MCF 10A (cell line): ENCODE measurements at regions of chr1 and their contacts with region 1.

Region 1: DNA sequence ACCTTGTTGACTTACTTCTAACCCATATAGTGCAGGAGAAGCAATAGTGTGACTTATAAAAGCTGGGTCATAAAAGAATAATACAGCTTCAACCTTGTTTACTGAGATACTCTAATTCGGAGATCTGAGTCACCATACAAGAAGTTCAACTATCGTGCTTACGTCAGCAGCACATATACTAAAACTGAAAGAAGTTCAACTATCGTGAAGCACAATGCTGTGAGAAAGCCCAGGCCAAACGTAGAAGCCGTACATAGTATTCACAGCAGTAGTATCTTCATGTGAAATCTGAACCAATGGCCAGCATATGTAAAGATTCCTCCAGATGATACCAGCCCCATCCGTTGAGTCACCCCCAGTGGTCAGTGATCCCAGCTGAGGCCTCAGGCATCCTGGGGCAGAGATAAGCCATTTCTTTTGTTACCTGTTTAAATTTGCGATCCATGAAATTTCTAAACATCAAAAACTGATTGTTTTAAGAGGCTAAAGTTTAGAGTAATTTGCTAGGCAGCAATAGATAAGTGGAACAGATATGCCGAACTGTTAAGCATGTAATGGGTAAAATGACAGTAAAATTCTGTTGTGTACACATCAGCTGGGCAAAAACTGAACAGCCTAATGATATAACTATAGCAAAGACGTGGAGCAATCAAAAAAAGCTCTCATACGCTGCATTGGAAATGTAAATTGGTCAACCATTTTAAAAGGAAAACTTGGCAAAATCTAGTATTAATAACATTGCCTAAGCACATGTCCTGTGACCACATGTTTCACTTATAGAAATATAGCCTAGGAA is 53.9 kb upstream of the SAMD13 start:
- DNase-seq: peak; percentile 83
- H3K4me3 Mint-ChIP-seq: peak overlapping the region; percentile 53
- H3K27ac Mint-ChIP-seq: peak overlapping the region; percentile 93
- H3K4me1 Mint-ChIP-seq: peaks cover 6% of the 10 kb centered on the region
- H3K27me3 Mint-ChIP-seq: no peaks in the 10 kb centered on the region
- CTCF ChIP-seq: no peak

Region 2: GRCh38 chr1:84271441-84272151 is 24.0 kb after region 1 on chr1:
- CTCF ChIA-PET with region 1: no interaction called
- POLR2A ChIA-PET with region 1: no interaction called
- intact Hi-C with region 1: no loop called
- DNase-seq: no peak
- H3K4me3 Mint-ChIP-seq: no peak overlapping the region
- H3K27ac Mint-ChIP-seq: no peak overlapping the region
- H3K4me1 Mint-ChIP-seq: peaks cover 6% of the 10 kb centered on the region
- H3K27me3 Mint-ChIP-seq: no peaks in the 10 kb centered on the region
- CTCF ChIP-seq: no peak

Region 3: DNA sequence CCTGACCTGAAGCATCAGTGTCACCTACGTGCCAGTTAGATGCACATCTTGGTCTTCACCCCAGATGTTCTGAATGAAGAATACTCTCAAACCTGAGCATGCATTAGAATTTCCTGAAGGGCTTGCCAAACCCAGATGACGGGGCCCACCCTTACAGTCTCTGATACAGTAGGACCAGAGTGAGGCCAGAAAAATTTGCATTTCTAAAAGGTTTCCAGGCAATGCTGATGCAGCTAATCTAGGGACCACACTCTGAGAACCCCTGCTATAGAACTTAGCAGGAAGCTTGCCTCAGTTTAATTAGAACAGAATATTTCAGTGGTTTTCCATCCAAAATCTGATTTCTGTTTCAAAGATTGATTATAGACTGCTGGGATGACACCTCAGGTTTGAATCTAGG is 336.5 kb after region 1 on chr1:
- CTCF ChIA-PET with region 1: no interaction called
- POLR2A ChIA-PET with region 1: no interaction called
- intact Hi-C with region 1: loop called (anchors 5 kb)
- DNase-seq: no peak
- H3K4me3 Mint-ChIP-seq: no peak overlapping the region
- H3K27ac Mint-ChIP-seq: no peak overlapping the region
- H3K4me1 Mint-ChIP-seq: no peaks in the 10 kb centered on the region
- H3K27me3 Mint-ChIP-seq: no peaks in the 10 kb centered on the region
- CTCF ChIP-seq: no peak